Heart right ventricle (tissue), 16 donors: ENCODE measurements at regions of chr16 and their contacts with region 1.

Region 1: GRCh38 chr16:13193721-13194120 is 292.3 kb downstream of the SHISA9 start:
- DNase-seq: no peak
- ATAC-seq: no peak
- H3K4me3 ChIP-seq: no peak overlapping the region
- H3K27ac ChIP-seq: no peak overlapping the region
- H3K4me1 ChIP-seq: no peaks in the 10 kb centered on the region
- H3K27me3 ChIP-seq: peaks cover 0 to 4% (median 0%) of the 10 kb centered on the region in 7 donors
- CTCF ChIP-seq: no peak

Region 2: GRCh38 chr16:13130586-13130985 is 63.1 kb before region 1 on chr16:
- intact Hi-C with region 1: no loop called
- DNase-seq: no peak
- ATAC-seq: no peak
- H3K4me3 ChIP-seq: no peak overlapping the region
- H3K27ac ChIP-seq: no peak overlapping the region
- H3K4me1 ChIP-seq: no peaks in the 10 kb centered on the region
- H3K27me3 ChIP-seq: peaks cover 0 to 6% (median 0%) of the 10 kb centered on the region in 7 donors
- CTCF ChIP-seq: no peak

Region 3: GRCh38 chr16:13206606-13207005 is 12.9 kb after region 1 on chr16:
- intact Hi-C with region 1: loop called in 1 of 10 experiments (anchors 1 kb)
- DNase-seq: no peak
- ATAC-seq: no peak
- H3K4me3 ChIP-seq: no peak overlapping the region
- H3K27ac ChIP-seq: no peak overlapping the region
- H3K4me1 ChIP-seq: no peaks in the 10 kb centered on the region
- H3K27me3 ChIP-seq: peaks cover 0 to 5% (median 4%) of the 10 kb centered on the region in 7 donors
- CTCF ChIP-seq: no peak